Calu3 (cell line): ENCODE measurements at regions of chr4 and their contacts with region 1.

Region 1: GRCh38 chr4:114386637-114387233 is 211.9 kb upstream of the UGT8 start:
- DNase-seq: peak; percentile 7
- H3K4me3 Mint-ChIP-seq: no peak overlapping the region
- H3K27ac Mint-ChIP-seq: no peak overlapping the region
- H3K4me1 Mint-ChIP-seq: no peaks in the 10 kb centered on the region
- H3K27me3 Mint-ChIP-seq: no peaks in the 10 kb centered on the region
- CTCF ChIP-seq: peak; percentile 38

Region 2: DNA sequence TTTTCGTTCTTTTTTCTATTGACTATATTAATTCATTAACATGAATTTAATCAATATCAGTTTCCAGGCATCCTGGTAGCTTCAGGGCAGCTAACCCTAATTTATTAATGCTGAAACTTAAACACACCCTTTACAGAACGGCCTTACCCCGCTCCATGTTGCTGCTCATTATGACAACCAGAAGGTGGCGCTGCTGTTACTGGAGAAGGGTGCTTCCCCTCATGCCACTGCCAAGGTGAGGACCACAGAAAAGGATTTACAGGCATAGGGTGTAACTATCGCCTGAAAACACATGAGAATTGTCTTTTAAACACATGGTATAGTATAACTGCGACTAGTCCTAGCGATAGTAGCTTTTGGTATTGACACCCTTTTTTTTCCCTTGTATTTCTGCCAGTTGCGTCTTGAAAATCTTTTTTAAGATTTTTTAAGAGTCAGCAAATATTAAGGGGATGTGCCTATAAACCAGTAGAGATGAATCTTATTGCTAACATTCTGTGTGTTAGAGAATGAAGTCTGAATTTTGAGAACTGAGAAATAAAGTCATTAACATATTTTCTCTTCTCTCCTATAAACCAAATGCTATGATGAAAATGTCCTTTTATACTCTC is 1108.3 kb before region 1 on chr4:
- CTCF ChIA-PET with region 1: no interaction called
- intact Hi-C with region 1: loop called (anchors 5 kb)
- DNase-seq: peak; percentile 65
- H3K4me3 Mint-ChIP-seq: no peak overlapping the region
- H3K27ac Mint-ChIP-seq: no peak overlapping the region
- H3K4me1 Mint-ChIP-seq: no peaks in the 10 kb centered on the region
- H3K27me3 Mint-ChIP-seq: no peaks in the 10 kb centered on the region
- CTCF ChIP-seq: peak; percentile 47

Region 3: GRCh38 chr4:113781439-113782040 is 605.2 kb before region 1 on chr4:
- CTCF ChIA-PET with region 1: no interaction called
- intact Hi-C with region 1: loop called (anchors 5 kb)
- DNase-seq: no peak
- H3K4me3 Mint-ChIP-seq: no peak overlapping the region
- H3K27ac Mint-ChIP-seq: no peak overlapping the region
- H3K4me1 Mint-ChIP-seq: peaks cover 23% of the 10 kb centered on the region
- H3K27me3 Mint-ChIP-seq: no peaks in the 10 kb centered on the region
- CTCF ChIP-seq: peak; percentile 48

Region 4: GRCh38 chr4:113893546-113893945 is 493.2 kb before region 1 on chr4:
- CTCF ChIA-PET with region 1: no interaction called
- intact Hi-C with region 1: no loop called
- DNase-seq: no peak
- H3K4me3 Mint-ChIP-seq: no peak overlapping the region
- H3K27ac Mint-ChIP-seq: no peak overlapping the region
- H3K4me1 Mint-ChIP-seq: no peaks in the 10 kb centered on the region
- H3K27me3 Mint-ChIP-seq: no peaks in the 10 kb centered on the region
- CTCF ChIP-seq: no peak

Region 5: GRCh38 chr4:114311787-114312186 is 74.9 kb before region 1 on chr4:
- CTCF ChIA-PET with region 1: no interaction called
- intact Hi-C with region 1: no loop called
- DNase-seq: no peak
- H3K4me3 Mint-ChIP-seq: no peak overlapping the region
- H3K27ac Mint-ChIP-seq: no peak overlapping the region
- H3K4me1 Mint-ChIP-seq: peaks cover 8% of the 10 kb centered on the region
- H3K27me3 Mint-ChIP-seq: no peaks in the 10 kb centered on the region
- CTCF ChIP-seq: no peak

Region 6: DNA sequence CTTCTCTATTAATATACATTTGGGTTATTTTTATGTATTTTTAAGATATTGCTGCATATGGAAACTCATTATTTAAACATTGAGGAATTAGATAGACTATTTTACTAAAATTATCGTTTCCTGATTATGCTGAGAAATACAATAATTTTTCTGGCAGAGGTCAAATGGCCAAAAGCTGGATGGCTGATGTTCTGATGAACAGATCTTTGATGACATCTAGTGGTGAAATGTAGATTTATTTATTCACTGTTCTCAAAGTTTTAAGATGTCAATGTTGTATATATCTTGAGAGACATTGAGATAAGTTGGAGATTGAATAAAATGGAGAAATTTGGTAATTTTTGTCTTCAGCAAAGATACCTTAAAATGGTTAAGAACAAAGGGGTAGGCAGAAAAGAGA is 308.0 kb after region 1 on chr4:
- CTCF ChIA-PET with region 1: no interaction called
- intact Hi-C with region 1: loop called (anchors 1 kb)
- DNase-seq: peak; percentile 1
- H3K4me3 Mint-ChIP-seq: no peak overlapping the region
- H3K27ac Mint-ChIP-seq: no peak overlapping the region
- H3K4me1 Mint-ChIP-seq: no peaks in the 10 kb centered on the region
- H3K27me3 Mint-ChIP-seq: no peaks in the 10 kb centered on the region
- CTCF ChIP-seq: peak; percentile 30